Activated naive CD4-positive, alpha-beta T cell treated with anti-CD3 and anti-CD28 coated beads, Interleukin-2, amount 10 ng/mL, durations not matched to agents 7 days and 5 days (primary cell): ENCODE measurements at regions of chr2 and their contacts with region 1.

Region 1: DNA sequence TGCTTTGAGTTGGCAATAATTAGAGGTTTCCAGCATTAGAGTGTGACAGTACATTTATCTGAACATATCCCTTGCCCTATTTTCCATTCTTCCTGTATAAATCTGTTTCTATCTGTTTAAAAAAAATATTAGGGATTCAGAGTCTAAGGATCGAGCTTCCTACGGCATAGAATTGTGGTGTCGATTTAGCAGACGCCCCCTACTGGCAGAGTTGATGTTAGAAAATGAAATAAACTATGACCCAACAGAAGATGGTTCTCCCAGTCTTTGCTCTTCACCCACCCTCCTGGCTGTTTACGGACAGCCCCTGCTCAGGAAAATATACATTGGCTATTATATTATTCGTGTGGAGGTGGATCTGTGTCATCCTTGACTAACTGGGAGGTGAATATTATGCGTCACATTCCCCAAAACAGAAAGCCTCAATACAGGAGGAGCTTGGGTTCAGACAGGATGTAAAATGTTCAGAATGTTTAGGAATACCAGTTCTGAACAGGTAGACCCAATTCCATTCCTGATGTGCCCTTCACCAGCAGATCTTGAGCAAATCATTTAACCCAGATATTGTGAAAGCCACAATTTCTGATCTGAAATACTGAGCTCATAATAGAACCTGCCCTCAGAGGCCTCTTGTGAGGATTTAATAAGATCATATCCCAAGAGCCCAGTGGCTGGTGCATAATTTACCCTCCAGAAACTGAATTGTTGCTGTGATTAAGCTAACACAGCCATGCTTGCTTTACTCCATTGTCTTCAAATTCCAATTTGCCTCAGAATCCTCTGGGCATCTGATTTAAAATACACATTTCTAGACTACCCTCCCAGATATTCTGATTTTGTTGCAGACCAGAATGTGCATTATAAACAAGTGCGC is 10.8 kb upstream of the ERMN start:
- DNase-seq: peak; percentile 52
- H3K4me3 Mint-ChIP-seq: peak overlapping the region; percentile 35
- H3K27ac Mint-ChIP-seq: peak overlapping the region; percentile 39
- H3K4me1 Mint-ChIP-seq: peaks cover 52% of the 10 kb centered on the region
- H3K27me3 Mint-ChIP-seq: no peaks in the 10 kb centered on the region

Region 2: DNA sequence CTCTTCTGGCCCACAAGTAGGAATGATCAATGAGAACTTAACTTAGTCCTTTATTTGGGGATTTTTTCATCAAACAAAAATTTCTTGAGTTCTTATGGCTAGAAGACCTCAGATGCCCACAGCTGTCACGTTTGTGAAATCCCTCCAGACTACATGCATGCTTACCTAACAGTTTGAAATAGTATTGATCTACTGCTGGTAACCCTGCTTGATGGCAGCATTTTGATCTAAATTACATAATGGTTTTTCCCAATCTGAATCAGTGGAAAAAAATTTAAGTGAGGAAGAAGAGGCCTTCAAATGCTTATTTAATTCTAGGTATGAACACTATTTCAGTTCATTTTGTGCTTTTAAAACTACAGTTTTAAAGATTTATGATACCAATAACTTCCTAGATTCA is 24.7 kb before region 1 on chr2:
- CTCF ChIA-PET with region 1: interaction called, 14 read pairs
- DNase-seq: no peak
- H3K4me3 Mint-ChIP-seq: no peak overlapping the region
- H3K27ac Mint-ChIP-seq: no peak overlapping the region
- H3K4me1 Mint-ChIP-seq: peaks cover 12% of the 10 kb centered on the region
- H3K27me3 Mint-ChIP-seq: no peaks in the 10 kb centered on the region

Region 3: GRCh38 chr2:157321466-157321865 is 14.9 kb before region 1 on chr2:
- CTCF ChIA-PET with region 1: interaction called, 96 read pairs
- DNase-seq: no peak
- H3K4me3 Mint-ChIP-seq: no peak overlapping the region
- H3K27ac Mint-ChIP-seq: no peak overlapping the region
- H3K4me1 Mint-ChIP-seq: peaks cover 7% of the 10 kb centered on the region
- H3K27me3 Mint-ChIP-seq: no peaks in the 10 kb centered on the region

Region 4: DNA sequence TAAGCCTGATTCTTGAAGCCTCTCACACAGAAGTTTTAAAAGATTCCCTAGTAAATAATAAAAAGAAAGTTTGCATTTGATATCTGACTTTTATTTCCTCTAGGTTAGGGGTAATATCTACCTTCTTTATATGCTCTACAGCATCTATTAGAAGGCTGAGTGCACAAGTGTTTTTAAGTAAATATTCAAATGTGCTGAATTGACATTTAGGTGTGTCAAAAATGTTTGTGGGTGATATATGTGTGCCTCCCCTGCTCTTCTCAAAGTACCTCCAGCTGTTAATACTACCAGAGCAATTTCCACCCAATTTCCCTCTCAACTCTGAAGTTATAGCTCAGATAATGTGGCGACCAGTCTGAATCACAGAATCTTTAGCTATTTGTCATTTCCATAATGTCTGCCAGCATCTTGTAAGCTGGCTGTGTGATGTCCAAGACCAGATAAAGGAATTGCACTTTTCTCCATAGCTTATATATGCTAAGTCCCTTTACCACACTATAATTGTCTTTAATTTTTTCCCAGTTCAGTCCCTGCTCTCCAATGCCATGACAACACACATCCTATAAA is 13.7 kb after region 1 on chr2:
- CTCF ChIA-PET with region 1: interaction called, 43 read pairs
- DNase-seq: no peak
- H3K4me3 Mint-ChIP-seq: no peak overlapping the region
- H3K27ac Mint-ChIP-seq: no peak overlapping the region
- H3K4me1 Mint-ChIP-seq: peaks cover 8% of the 10 kb centered on the region
- H3K27me3 Mint-ChIP-seq: no peaks in the 10 kb centered on the region

Region 5: GRCh38 chr2:157404363-157404762 is 68.0 kb after region 1 on chr2:
- CTCF ChIA-PET with region 1: interaction called, 27 read pairs
- DNase-seq: peak; percentile 79
- H3K4me3 Mint-ChIP-seq: peak overlapping the region; percentile 65
- H3K27ac Mint-ChIP-seq: peak overlapping the region; percentile 99
- H3K4me1 Mint-ChIP-seq: peaks cover 75% of the 10 kb centered on the region
- H3K27me3 Mint-ChIP-seq: no peaks in the 10 kb centered on the region